AG04450 (cell line): ENCODE measurements at regions of chr14 and their contacts with region 1.

Region 1: GRCh38 chr14:37253905-37254304 is 56.2 kb downstream of the MIPOL1 start:
- DNase-seq: peak; percentile 16
- H3K4me3 ChIP-seq: no peak overlapping the region
- H3K27ac ChIP-seq: no peak overlapping the region
- H3K27me3 ChIP-seq: no peaks in the 10 kb centered on the region
- CTCF ChIP-seq: no peak

Region 2: DNA sequence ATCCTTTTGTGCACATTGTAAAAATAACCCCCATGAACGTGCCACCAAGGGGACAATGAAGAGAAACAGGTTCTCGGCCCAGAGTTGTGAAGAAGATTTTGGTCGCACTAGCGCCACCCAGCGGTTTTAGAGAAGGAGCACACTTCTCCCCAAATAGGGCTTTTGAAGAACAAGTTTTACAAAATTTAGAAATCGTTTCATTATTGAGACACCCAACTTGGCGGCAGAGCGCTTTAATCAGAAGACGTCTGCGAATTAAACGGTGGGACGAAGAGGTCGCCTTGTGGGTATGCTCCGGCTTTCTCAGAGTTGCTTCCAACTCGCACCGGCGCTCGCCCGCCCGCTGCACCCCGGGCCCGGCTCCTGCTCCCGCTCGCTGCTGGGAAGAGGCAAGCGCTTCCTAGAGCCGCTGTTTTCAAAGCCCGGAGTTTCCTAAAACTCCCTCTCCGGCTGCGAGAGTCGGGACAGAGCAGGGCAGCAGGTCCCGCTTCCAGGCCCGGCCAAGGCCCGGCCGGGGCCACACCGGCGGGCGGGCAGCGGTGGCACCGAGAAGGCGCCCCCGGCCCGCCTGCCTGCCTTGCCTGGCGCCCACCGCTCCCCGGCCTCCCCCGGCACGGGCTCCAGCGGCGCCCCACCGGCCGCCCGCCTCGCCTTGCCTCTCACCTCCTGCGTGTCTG is 340.5 kb after region 1 on chr14:
- CTCF ChIA-PET with region 1: interaction called, 25 read pairs
- POLR2A ChIA-PET with region 1: no interaction called
- DNase-seq: peak; percentile 32
- H3K4me3 ChIP-seq: peak overlapping the region; percentile 61
- H3K27ac ChIP-seq: no peak overlapping the region
- H3K27me3 ChIP-seq: peaks cover 77% of the 10 kb centered on the region
- CTCF ChIP-seq: peak; percentile 86